PC-9 (cell line): ENCODE measurements at regions of chr16 and their contacts with region 1.

Region 1: GRCh38 chr16:10509534-10510025 is 70.8 kb downstream of the EMP2 start:
- DNase-seq: peak; percentile 46 to 61
- H3K4me3 ChIP-seq: no peak overlapping the region
- H3K27ac ChIP-seq: no peak overlapping the region
- H3K4me1 ChIP-seq: peaks cover 4% of the 10 kb centered on the region; the same call in 1 of the 2 replicates
- H3K27me3 ChIP-seq: no peaks in the 10 kb centered on the region
- CTCF ChIP-seq: peak; percentile 88

Region 2: DNA sequence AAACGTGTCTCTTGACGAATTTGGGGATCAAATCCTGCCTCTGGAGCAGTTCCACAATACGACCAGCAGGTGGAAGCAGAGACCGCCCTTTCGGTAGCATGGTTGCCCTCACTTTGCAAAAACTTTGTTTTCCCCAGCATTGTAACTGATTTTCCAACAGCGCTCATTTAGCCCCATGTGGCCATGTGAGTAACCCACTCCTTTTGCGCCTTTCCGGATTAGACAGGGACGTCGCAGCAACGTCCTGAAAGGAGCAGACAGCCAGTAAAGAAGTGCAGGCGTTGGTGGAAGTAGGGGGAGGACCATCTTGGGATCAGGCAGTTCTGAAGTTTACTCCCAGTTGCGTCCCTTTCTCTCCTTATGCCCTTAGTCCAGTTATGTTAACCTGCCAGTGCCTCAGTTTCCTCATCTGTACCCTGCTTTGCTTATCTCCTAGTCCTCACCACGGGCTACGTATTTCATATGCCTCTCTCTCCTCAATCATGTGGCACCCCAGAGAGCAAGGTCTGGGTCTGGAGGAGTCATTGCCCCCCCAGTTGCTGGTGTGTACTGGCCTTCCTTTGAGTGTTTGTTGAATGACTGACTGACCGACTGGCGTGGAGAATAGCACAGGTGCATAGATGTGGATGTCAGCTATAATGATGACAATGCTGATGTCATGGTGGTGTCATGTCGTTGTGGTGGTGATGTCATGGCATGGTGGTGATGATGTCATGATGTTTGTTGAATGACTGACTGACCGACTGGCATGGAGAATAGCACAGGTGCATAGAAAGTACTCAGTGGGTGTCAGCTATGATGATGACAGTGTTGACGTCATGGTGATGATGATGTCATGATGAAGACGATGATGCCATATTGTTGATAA is 1941.6 kb before region 1 on chr16:
- CTCF ChIA-PET with region 1: no interaction called
- POLR2A ChIA-PET with region 1: no interaction called
- intact Hi-C with region 1: loop called (anchors 1 kb)
- DNase-seq: peak; percentile 77
- H3K4me3 ChIP-seq: no peak overlapping the region
- H3K27ac ChIP-seq: no peak overlapping the region
- H3K4me1 ChIP-seq: no peaks in the 10 kb centered on the region
- H3K27me3 ChIP-seq: peaks cover 9% of the 10 kb centered on the region; the same call in 1 of the 2 replicates
- CTCF ChIP-seq: peak; percentile 96

Region 3: DNA sequence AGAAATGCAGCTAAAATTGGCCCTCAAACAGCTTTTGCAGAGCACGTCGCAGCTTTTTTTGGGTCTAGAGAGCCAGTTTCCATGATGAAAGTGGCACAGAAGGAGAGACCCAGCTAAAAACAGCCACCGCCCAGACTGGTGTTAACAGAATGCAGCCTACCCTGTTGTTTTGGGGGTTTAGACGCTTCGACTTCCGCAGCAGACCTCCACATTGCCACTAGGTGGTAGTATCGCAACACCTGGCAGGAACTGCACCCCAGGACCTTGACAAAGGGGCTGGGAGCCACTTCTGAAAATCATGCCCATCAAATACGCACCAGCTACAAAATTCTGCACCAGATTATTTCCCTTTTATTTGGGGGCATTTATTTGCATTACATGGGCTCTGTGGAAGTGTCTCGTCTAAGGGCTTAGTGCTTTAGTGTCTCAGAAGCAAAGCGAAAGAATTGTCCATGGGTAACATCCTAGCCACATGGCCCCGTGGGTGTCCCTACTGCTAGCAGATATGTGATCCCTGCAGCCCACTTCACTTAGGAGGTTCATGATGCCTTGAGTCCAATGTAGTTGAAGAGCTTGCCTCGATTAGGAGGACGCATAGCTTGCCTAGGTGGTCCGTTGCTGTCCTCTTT is 1251.0 kb before region 1 on chr16:
- CTCF ChIA-PET with region 1: interaction called, 5 read pairs
- POLR2A ChIA-PET with region 1: no interaction called
- intact Hi-C with region 1: loop called (anchors 10 kb)
- DNase-seq: peak in 1 of 2 experiments; percentile 27
- H3K4me3 ChIP-seq: no peak overlapping the region
- H3K27ac ChIP-seq: no peak overlapping the region
- H3K4me1 ChIP-seq: no peaks in the 10 kb centered on the region
- H3K27me3 ChIP-seq: peaks cover 11% of the 10 kb centered on the region; the same call in 1 of the 2 replicates
- CTCF ChIP-seq: peak; percentile 67

Region 4: GRCh38 chr16:10256784-10257641 is 252.6 kb before region 1 on chr16:
- CTCF ChIA-PET with region 1: no interaction called
- POLR2A ChIA-PET with region 1: no interaction called
- intact Hi-C with region 1: loop called (anchors 1 kb)
- DNase-seq: peak in 1 of 2 experiments; percentile 16
- H3K4me3 ChIP-seq: no peak overlapping the region
- H3K27ac ChIP-seq: no peak overlapping the region
- H3K4me1 ChIP-seq: no peaks in the 10 kb centered on the region
- H3K27me3 ChIP-seq: peaks cover 31% of the 10 kb centered on the region
- CTCF ChIP-seq: peak; percentile 85

Region 5: DNA sequence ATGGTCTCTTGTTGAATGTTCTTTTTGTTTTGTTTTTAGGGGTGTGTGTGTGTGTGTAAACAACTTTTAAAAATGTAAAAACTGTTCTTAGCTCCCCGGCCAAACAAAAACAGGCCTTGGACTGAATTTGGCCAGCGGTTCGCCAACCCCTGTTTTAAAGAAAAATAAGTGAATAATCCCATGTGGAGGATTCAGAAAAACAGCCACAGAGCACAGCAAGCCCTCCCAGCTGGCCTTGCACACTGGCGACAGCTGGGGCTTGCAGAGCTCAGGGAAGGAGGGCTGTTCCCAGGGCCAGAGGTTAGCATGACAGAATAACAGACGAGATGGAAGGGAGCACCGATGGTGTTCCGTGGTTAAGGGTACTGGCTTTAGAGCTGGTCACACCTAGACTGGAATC is 31.8 kb after region 1 on chr16:
- CTCF ChIA-PET with region 1: no interaction called
- POLR2A ChIA-PET with region 1: no interaction called
- intact Hi-C with region 1: no loop called
- DNase-seq: no peak
- H3K4me3 ChIP-seq: no peak overlapping the region
- H3K27ac ChIP-seq: peak overlapping the region; percentile 92
- H3K4me1 ChIP-seq: peaks cover 47% of the 10 kb centered on the region
- H3K27me3 ChIP-seq: no peaks in the 10 kb centered on the region
- CTCF ChIP-seq: no peak

Region 6: DNA sequence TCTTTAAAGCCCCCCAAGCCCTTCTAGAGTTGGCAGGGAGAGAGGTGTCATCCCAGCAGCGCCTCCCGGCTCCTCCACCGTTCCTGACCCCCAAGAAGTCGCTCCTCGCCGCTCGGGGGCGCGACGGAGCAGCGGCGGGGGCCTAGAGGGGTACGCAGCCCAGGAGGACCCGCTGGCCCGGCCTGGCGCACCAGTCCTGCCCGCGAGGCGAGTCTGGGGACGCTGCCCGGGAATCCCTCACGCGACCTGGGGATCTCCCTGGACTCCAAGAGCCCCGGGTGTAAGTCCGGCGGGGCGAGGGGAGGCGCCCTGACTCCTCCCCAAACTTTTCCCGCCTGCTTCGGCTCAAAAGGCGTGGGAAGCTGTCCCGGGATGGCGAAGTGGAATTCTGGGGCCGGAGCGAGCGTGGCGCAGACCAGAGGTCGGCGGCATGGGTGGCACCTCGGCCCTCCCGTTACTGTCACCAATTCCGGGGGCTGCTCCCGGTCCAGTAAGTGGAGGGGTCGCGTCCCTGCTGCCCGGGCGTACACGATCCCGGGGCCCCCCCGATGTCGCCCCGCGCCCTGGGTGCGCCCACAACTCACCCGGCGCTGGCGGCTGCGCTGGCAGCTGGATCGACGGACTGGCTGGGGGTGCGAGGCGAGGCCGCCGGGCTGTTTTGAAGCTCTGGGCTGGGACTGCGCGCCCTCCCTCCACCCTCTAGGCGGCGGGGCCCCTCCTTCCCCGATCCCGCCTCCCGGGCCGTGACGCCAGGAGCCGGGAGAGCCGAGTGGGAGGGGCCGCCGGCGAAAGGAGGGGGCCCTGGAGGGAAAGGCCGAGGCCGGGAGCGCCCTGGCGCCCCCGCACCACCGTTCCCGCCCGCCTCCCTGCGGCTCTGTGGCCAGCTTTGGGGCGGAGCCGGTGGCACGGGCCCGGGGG is 70.6 kb after region 1 on chr16 and contains the start of gene EMP2:
- CTCF ChIA-PET with region 1: no interaction called
- POLR2A ChIA-PET with region 1: no interaction called
- intact Hi-C with region 1: no loop called
- DNase-seq: peak; percentile 56 to 89
- H3K4me3 ChIP-seq: peak within 1 kb of the TSS; percentile 92
- H3K27ac ChIP-seq: 0 out of 2 replicates have a peak within 1 kb of the TSS, but pooled peaks have one; percentile 31
- H3K4me1 ChIP-seq: peaks cover 53% of the 10 kb centered on the region
- H3K27me3 ChIP-seq: no peaks in the 10 kb centered on the region
- CTCF ChIP-seq: peak; percentile 67; the same call in 1 of the 2 replicates
- total RNA-seq, gene EMP2: 82.5 and 137 TPM in 2 replicates

Region 7: GRCh38 chr16:10737068-10737625 is 227.6 kb after region 1 on chr16:
- CTCF ChIA-PET with region 1: interaction called, 15 read pairs
- POLR2A ChIA-PET with region 1: no interaction called
- intact Hi-C with region 1: loop called (anchors 1 kb)
- DNase-seq: peak; percentile 67 to 70
- H3K4me3 ChIP-seq: no peak overlapping the region
- H3K27ac ChIP-seq: no peak overlapping the region
- H3K4me1 ChIP-seq: peaks cover 8% of the 10 kb centered on the region
- H3K27me3 ChIP-seq: no peaks in the 10 kb centered on the region
- CTCF ChIP-seq: peak; percentile 95

Region 8: GRCh38 chr16:10918294-10919002 is 408.9 kb after region 1 on chr16:
- CTCF ChIA-PET with region 1: interaction called, 8 read pairs
- POLR2A ChIA-PET with region 1: no interaction called
- intact Hi-C with region 1: loop called (anchors 1 kb)
- DNase-seq: peak; percentile 62 to 89
- H3K4me3 ChIP-seq: no peak overlapping the region
- H3K27ac ChIP-seq: no peak overlapping the region
- H3K4me1 ChIP-seq: no peaks in the 10 kb centered on the region
- H3K27me3 ChIP-seq: no peaks in the 10 kb centered on the region
- CTCF ChIP-seq: peak; percentile 94